ENCODE measurements at regions of chr1 and their contacts with region 1.

Region 1: DNA sequence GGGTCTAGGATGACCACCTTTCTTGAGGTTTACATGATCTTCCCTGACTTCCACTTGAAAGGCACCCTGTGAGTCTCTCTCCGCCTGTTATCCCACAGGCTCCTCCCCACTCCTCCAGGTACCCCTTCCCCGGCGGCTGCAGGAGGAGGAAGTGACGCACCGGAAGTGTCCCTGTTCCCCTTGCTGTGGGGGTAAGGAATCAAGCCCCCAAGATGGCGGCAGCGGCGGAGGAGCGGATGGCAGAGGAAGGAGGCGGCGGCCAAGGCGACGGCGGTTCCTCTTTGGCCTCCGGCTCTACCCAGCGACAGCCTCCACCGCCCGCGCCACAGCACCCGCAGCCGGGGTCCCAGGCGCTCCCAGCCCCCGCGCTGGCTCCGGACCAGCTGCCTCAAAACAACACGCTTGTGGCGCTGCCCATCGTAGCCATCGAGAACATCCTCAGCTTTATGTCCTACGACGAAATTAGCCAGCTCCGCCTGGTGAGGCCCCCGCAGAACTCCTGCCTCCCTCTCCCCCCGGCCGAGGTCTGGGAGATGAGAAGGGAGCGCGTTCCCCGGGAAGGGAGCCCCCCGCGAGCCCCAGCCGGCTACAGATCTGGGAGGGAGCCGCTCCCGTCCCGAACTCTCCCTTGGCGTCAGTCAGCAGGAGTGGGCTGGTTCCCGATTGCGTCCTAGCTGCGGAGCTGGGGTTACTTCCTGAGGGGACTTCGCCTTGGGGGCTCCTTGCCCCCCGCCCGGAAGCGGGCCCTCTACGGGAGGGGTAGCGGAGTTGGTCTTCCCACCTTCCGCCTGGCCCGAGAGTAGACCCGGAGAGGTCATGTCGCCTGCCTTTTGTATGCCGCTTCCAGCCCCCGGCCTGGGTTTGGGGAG is at the start of gene FBXO28:
- DNase-seq: peak; percentile 61
- H3K4me3 ChIP-seq: peak within 1 kb of the TSS; percentile 84
- CTCF ChIP-seq: no peak

Region 2: DNA sequence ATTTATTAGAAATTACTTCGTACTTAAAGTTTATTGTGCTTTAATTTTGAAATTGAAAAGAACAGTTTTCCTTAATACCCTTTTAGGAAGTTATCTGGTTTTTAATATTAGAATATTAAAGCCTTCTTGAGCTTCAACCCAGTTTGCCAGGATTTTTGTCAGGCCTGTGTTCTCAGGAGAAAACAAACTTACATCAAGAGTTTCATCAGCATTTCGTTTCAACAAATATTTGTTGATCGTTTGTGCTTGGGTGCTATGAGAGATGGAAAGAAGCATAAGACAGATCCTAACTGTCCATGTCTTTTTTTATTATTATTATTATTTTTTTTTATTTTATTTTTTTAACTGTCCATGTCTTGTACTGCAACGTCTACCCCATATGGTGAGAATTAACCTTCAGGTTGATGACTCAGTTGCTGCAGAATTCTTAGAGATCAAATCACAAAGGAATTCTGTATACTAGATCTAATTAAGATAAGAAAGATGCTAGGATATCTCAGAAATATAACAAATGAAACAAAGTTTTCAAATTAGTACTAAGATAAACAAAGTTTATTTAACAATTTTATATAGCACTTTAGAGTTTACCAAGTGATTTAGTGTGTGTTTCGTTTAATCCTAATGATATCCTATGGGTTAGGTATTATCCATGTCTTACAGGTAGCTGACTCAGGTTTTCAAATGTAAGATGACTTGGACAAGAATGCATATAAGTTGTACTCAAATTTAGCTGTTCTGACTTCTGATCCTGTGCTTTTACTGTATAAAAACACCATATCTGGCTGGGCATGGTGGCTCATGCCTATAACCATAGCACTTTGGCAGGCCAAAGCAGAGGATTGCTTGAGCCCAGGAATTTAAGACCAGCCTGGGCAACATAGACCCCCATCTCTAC is 14.0 kb after region 1 on chr1:
- CTCF ChIA-PET with region 1: interaction called, 20 read pairs
- POLR2A ChIA-PET with region 1: no interaction called
- DNase-seq: no peak
- H3K4me3 ChIP-seq: no peak overlapping the region
- CTCF ChIP-seq: no peak

Region 3: GRCh38 chr1:224137518-224137917 is 23.4 kb after region 1 on chr1:
- CTCF ChIA-PET with region 1: interaction called, 12 read pairs
- POLR2A ChIA-PET with region 1: no interaction called
- DNase-seq: no peak
- H3K4me3 ChIP-seq: no peak overlapping the region
- CTCF ChIP-seq: no peak